ENCODE measurements at regions of chr10 and their contacts with region 1.

Region 1: GRCh38 chr10:124063750-124064603 is 29.4 kb downstream of the CHST15 start:
- DNase-seq: peak; percentile 82
- ATAC-seq: peak; percentile 97
- H3K4me3 ChIP-seq: peak overlapping the region; percentile 54
- H3K27ac ChIP-seq: peak overlapping the region; percentile 93
- H3K4me1 ChIP-seq: peaks cover 29% of the 10 kb centered on the region
- H3K27me3 ChIP-seq: no peaks in the 10 kb centered on the region
- CTCF ChIP-seq: no peak

Region 2: GRCh38 chr10:124025660-124026588 is 38.1 kb before region 1 on chr10:
- CTCF ChIA-PET with region 1: no interaction called
- POLR2A ChIA-PET with region 1: no interaction called
- intact Hi-C with region 1: loop called (anchors 1 kb)
- DNase-seq: peak; percentile 38
- ATAC-seq: peak; percentile 43; the same call in 1 of the 2 replicates
- H3K4me3 ChIP-seq: no peak overlapping the region
- H3K27ac ChIP-seq: no peak overlapping the region
- H3K4me1 ChIP-seq: peaks cover 7% of the 10 kb centered on the region
- H3K27me3 ChIP-seq: no peaks in the 10 kb centered on the region
- CTCF ChIP-seq: peak; percentile 57

Region 3: GRCh38 chr10:124049484-124049883 is 14.5 kb before region 1 on chr10:
- CTCF ChIA-PET with region 1: no interaction called
- POLR2A ChIA-PET with region 1: no interaction called
- intact Hi-C with region 1: loop called (anchors 1 kb)
- DNase-seq: peak; percentile 73
- ATAC-seq: peak; percentile 87
- H3K4me3 ChIP-seq: no peak overlapping the region
- H3K27ac ChIP-seq: peak overlapping the region; percentile 36; the same call in 1 of the 2 replicates
- H3K4me1 ChIP-seq: peaks cover 26% of the 10 kb centered on the region
- H3K27me3 ChIP-seq: no peaks in the 10 kb centered on the region
- CTCF ChIP-seq: no peak

Region 4: GRCh38 chr10:124106241-124106879 is 42.4 kb after region 1 on chr10:
- CTCF ChIA-PET with region 1: no interaction called
- POLR2A ChIA-PET with region 1: no interaction called
- intact Hi-C with region 1: loop called (anchors 5 kb)
- DNase-seq: peak; percentile 91
- ATAC-seq: peak; percentile 77
- H3K4me3 ChIP-seq: peak overlapping the region; percentile 53
- H3K27ac ChIP-seq: peak overlapping the region; percentile 78
- H3K4me1 ChIP-seq: peaks cover 26% of the 10 kb centered on the region
- H3K27me3 ChIP-seq: no peaks in the 10 kb centered on the region
- CTCF ChIP-seq: no peak

Measured in PC-3 (cell line).